Heart left ventricle (tissue), 16 donors: ENCODE measurements at regions of chr1 and their contacts with region 1.

Region 1: DNA sequence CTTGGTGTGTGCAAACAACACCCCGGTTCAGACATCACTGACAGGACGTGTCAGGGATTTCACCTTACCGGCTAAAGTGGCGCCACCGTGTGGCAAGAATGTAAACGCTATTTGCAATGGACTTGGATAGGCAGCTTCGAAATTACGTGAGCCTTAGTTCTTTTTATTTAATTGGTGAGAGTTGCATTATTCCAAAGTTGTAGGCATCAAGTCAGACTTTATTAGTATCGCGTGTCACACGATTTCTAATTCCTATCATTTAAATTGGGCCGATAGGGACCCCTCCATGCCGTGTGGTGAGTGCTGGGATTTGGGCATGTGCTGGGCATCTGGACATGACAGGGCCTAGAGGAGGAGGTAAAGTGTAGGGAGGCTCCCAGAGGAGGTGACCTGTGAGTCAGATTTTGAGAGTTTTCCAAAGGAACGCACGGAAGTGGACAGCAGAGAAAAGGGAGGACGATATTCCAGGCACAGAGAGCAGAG is 14.5 kb upstream of the CPT2 start:
- DNase-seq: peak; percentile 75 to 87 (median 80)
- ATAC-seq: peak in 3 of 4 donors; percentile 31 to 75 (median 60)
- H3K4me3 ChIP-seq: no peak overlapping the region
- H3K27ac ChIP-seq: peak overlapping the region in 3 of 12 donors; percentile 16 to 45 (median 32)
- H3K4me1 ChIP-seq: peaks cover 0 to 23% (median 6%) of the 10 kb centered on the region in 12 donors
- H3K27me3 ChIP-seq: no peaks in the 10 kb centered on the region
- CTCF ChIP-seq: peak; percentile 77 to 94 (median 89)
- POLR2A ChIP-seq: no peak

Region 2: GRCh38 chr1:52697795-52698674 is 484.1 kb before region 1 on chr1 and contains the start of gene COA7:
- intact Hi-C with region 1: loop called in 4 of 10 experiments (anchors 2 to 10 kb)
- DNase-seq: peak; percentile 90 to 93 (median 91)
- ATAC-seq: peak; percentile 77 to 92 (median 90)
- H3K4me3 ChIP-seq: peak within 1 kb of the TSS; percentile 33 to 96 (median 76)
- H3K27ac ChIP-seq: peak within 1 kb of the TSS; percentile 47 to 91 (median 84)
- H3K4me1 ChIP-seq: peaks cover 0 to 24% (median 8%) of the 10 kb centered on the region in 12 donors
- H3K27me3 ChIP-seq: no peaks in the 10 kb centered on the region
- CTCF ChIP-seq: no peak
- POLR2A ChIP-seq: peak in 1 of 2 donors; percentile 42
- total RNA-seq, gene COA7: 10.6 to 19.5 (median 16.3) TPM

Region 3: GRCh38 chr1:52842643-52843309 is 339.4 kb before region 1 on chr1 and contains the start of gene ZYG11A:
- intact Hi-C with region 1: loop called in 1 of 10 experiments (anchors 10 kb)
- DNase-seq: peak; percentile 33 to 79 (median 40)
- ATAC-seq: peak; percentile 42 to 97 (median 88)
- H3K4me3 ChIP-seq: peak within 1 kb of the TSS; percentile 15 to 56 (median 44)
- H3K27ac ChIP-seq: no peak within 1 kb of the TSS
- H3K4me1 ChIP-seq: peaks cover 0 to 14% (median 8%) of the 10 kb centered on the region in 12 donors
- H3K27me3 ChIP-seq: peaks cover 7 to 48% (median 17%) of the 10 kb centered on the region in 9 donors
- CTCF ChIP-seq: peak in 7 of 12 donors; percentile 10 to 49 (median 35)
- POLR2A ChIP-seq: no peak
- total RNA-seq, gene ZYG11A: 0.06 to 0.09 TPM in 2 of 9 donors, not detected in the others

Region 4: DNA sequence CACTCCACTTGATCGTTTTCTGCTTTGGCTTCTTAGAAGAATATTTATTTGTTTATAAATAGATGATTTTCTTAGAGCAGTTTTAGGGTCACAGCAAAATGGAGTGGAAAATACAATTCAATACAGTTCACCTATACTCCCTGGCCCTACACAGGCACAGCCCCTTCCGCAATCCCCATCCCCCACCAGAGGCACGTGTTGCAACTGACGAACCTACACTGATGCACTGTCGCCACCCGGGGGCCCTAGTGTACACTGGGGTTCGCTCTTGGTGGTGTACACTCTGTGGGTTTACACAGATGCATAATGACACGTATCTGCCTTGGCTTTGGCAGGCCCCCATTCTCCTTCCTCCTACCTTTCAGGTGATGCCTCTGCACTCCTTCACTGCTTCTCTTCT is 268.6 kb before region 1 on chr1:
- intact Hi-C with region 1: loop called in 7 of 10 experiments (anchors 5 to 10 kb)
- DNase-seq: no peak
- ATAC-seq: no peak
- H3K4me3 ChIP-seq: no peak overlapping the region
- H3K27ac ChIP-seq: no peak overlapping the region
- H3K4me1 ChIP-seq: peaks cover 0 to 33% (median 8%) of the 10 kb centered on the region in 12 donors
- H3K27me3 ChIP-seq: no peaks in the 10 kb centered on the region
- CTCF ChIP-seq: no peak
- POLR2A ChIP-seq: no peak

Region 5: DNA sequence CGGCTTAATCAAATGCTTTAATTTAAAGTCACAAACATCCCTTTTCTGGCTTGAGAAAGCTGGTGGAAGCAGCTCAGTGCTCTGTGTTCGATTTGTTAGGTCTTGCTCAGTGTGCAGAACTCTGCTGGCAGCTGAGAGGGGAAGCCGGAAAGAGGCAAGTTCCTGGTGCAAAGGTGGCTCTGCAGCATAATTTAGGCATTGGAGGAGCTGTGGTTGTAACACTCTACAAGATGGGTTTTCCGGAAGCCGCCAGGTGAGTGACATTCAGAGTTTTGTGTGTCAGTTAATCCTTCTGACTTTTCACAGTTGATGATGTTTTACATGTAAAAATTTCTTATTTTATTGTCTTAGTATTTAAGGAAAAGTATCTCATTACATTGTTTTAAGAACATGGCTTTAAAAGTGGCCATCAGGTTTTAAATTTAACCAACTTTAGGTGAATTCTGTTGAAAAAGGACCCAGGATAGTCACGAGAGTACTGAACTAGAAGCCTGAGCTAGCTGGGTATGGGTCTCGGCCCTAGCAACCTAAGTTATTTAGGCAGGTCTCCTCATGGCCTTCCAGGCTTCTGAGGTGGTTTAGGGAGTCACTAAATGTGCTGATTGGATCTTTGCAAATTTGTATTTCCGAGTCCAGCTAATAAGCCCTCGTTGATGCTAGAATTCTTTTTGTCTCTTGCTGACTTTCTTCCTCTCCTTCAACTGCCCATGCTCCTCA is 167.2 kb before region 1 on chr1:
- intact Hi-C with region 1: loop called in 2 of 10 experiments (anchors 5 to 10 kb)
- DNase-seq: peak; percentile 71 to 85 (median 83)
- ATAC-seq: peak; percentile 88 to 99 (median 97)
- H3K4me3 ChIP-seq: peak overlapping the region; percentile 21 to 74 (median 62)
- H3K27ac ChIP-seq: peak overlapping the region in 11 of 12 donors; percentile 1 to 75 (median 66)
- H3K4me1 ChIP-seq: peaks cover 0 to 25% (median 19%) of the 10 kb centered on the region in 12 donors
- H3K27me3 ChIP-seq: no peaks in the 10 kb centered on the region
- CTCF ChIP-seq: no peak
- POLR2A ChIP-seq: no peak

Region 6: GRCh38 chr1:53153752-53154151 is 28.4 kb before region 1 on chr1:
- intact Hi-C with region 1: no loop called
- DNase-seq: no peak
- ATAC-seq: no peak
- H3K4me3 ChIP-seq: no peak overlapping the region
- H3K27ac ChIP-seq: no peak overlapping the region
- H3K4me1 ChIP-seq: no peaks in the 10 kb centered on the region
- H3K27me3 ChIP-seq: no peaks in the 10 kb centered on the region
- CTCF ChIP-seq: no peak
- POLR2A ChIP-seq: no peak

Region 7: GRCh38 chr1:53220171-53220961 is 38.2 kb after region 1 on chr1 and contains the start of gene CZIB:
- intact Hi-C with region 1: loop called in 1 of 10 experiments (anchors 1 kb)
- DNase-seq: peak; percentile 95 to 98 (median 97)
- ATAC-seq: peak; percentile 94 to 98 (median 98)
- H3K4me3 ChIP-seq: peak within 1 kb of the TSS; percentile 47 to 99 (median 86)
- H3K27ac ChIP-seq: peak within 1 kb of the TSS; percentile 89 to 99 (median 95)
- H3K4me1 ChIP-seq: peaks cover 0 to 18% (median 13%) of the 10 kb centered on the region in 12 donors
- H3K27me3 ChIP-seq: no peaks in the 10 kb centered on the region
- CTCF ChIP-seq: no peak
- POLR2A ChIP-seq: peak in 1 of 2 donors; percentile 92
- total RNA-seq, gene CZIB: 39.4 to 52.1 (median 46.1) TPM

Region 8: DNA sequence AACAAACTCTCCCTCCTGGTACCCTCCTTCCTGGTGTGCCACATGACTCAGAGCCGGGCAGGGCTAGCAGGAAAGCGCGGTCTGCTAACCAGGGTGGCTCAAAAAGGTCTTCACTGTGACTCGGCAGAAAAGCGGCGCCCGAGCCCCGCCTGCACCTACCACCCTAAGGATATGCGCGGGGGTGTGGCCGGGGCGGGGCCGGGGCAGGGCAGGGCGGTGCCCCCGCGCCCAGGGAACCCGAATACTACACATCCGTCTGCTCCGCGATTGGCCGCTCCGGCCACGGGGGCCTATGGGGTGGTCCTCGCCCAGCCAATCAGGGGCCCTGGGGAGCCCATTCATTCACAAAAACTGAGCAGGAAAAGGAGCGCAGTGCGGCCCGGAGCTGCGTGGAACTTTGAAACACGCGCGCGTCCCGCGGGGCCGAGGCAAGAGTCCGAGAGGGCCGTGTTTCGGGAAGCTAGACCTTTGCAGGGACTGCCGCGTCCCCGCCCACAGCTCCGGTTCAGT is 144.0 kb after region 1 on chr1:
- intact Hi-C with region 1: no loop called
- DNase-seq: peak; percentile 85 to 92 (median 88)
- ATAC-seq: peak; percentile 94 to 96 (median 95)
- H3K4me3 ChIP-seq: peak overlapping the region; percentile 55 to 93 (median 70)
- H3K27ac ChIP-seq: peak overlapping the region in 9 of 12 donors; percentile 5 to 72 (median 41)
- H3K4me1 ChIP-seq: peaks cover 0 to 34% (median 17%) of the 10 kb centered on the region in 12 donors
- H3K27me3 ChIP-seq: peaks cover 0 to 4% (median 0%) of the 10 kb centered on the region in 9 donors
- CTCF ChIP-seq: no peak
- POLR2A ChIP-seq: no peak